Right ventricle myocardium inferior (tissue), 1 donor: ENCODE measurements at regions of chr5 and their contacts with region 1.

Region 1: GRCh38 chr5:138464008-138464387 is 1.3 kb upstream of the EGR1 start:
- DNase-seq: peak; percentile 98
- ATAC-seq: peak; percentile 83

Region 2: DNA sequence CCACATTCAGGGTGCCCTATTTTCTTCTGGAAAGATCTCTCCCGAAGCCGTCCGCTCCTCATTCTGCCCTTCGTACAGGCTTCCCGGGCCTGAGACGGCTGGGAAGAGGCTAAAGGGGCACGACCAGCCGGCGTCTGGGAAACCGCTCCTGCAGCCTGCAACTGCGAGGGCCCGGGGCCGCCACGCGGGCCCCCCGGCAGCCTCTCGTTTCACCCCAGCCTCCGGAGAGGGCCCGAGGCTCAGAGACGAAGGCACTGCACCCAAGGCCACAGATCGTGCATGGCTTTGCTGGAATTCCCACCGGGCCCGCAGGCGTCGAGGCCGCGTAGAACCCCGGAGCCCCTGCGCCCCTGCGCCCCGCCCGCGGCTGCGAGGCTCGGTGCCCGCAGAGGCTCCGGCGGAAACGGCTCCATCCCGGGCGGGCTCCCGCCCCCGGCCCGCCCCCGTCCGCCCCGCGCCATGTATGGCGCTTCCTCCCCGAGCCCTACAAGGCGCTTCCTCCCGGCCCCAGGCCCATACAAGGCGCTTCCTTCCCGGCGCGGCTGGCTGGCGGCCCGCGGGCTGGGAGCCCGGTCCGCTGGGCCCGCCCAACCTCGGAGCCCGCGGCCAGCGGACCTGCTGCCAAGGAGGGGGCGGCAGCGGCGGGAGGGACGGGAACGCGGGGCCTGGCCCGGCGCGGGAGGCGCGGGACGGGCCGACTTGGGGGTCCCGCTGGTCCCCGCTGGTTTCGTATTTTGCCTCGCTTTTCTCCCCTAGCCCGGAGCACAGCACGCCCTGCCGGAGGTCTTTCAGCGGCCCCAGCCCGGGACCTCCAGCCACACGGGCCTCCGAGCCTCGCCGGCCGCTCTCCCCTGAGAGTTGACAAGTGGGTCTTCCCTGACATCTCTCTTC is 27.9 kb after region 1 on chr5:
- intact Hi-C with region 1: loop called (anchors 1 kb)
- DNase-seq: peak; percentile 96
- ATAC-seq: peak; percentile 99

Region 3: DNA sequence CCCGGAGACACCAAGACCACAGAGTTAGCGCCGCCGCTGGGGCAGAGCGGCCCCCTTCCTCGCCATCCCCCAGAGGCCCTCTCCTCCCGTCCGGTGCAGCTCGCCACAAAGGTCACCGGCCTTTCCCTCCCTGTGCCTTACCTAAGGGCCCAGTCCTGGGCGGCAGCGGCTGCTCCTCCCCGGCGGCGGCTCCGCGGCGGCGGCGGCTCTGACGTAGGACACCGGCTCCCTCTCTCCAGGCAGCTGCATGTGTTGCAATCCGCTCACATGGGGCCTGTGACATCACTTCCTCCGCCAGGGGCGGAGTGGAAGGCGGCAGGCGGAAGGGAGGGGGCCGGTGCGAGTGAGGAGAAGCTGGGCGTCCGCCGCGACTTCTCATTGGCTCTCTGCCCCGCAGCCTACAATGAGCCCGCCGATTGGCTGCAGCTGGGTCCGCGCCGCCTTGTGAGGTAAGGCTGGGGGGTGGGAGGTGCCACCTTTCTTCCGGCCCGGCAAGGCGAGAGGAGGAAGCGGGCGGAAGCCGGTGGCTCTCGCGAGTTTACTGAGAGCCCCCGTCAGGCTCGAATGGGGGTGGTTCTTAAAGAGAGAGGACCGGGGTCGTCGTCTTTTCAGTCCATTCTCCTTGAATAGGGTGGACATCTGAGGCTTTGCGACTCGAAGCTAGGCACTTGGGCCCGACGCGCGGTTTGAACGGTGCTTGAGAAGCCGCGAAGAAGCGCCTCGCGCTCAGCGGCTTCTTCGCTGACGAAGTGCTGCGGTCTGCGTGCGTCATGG is 79.1 kb after region 1 on chr5 and contains the start of gene ETF1:
- intact Hi-C with region 1: loop called (anchors 1 kb)
- DNase-seq: peak; percentile 100
- ATAC-seq: peak; percentile 96
- total RNA-seq, gene ETF1: 90.6 TPM

Region 4: GRCh38 chr5:138594305-138595058 is 130.5 kb after region 1 on chr5:
- intact Hi-C with region 1: no loop called
- DNase-seq: peak; percentile 8
- ATAC-seq: no peak